ENCODE measurements at regions of chr6 and their contacts with region 1.

Region 1: DNA sequence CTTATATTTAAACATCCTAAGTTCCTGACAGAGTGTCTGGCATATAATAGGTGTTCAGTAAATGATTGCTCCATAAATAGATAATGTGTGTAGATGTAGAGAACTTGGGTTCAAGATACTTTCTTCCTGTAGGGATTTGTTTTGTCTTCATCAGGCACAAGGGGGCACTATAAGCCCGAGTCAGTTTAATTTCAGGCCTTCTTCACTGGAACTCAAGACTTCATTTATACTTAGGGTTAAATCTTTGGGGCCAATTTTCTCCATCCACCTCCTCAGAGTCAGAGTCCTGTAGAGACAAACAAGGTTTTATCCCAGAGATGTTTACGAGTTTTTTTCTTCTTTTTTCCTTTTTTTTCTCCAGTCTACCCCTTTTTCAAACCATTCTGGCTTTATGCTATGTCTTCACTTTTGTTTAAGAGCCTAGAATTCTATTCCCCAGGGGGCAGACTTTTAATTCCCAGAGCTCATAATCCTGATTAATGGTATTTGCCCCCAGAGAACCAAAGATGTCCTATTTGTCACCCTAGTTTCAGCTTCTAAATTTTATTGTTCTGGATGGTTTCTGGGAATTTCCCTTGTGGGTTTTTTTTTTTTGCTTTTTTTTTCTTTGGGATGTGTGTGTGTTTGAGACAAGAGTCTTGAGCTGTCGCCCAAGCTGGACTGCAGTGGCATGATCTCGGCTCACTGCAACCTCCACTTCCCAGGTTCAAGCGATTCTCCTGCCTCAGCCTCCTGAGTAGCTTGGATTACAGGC is 88.4 kb downstream of the HFE start:
- DNase-seq: peak; percentile 60
- H3K4me3 ChIP-seq: no peak overlapping the region
- H3K27ac ChIP-seq: no peak overlapping the region
- H3K4me1 ChIP-seq: peaks cover 3% of the 10 kb centered on the region
- H3K27me3 ChIP-seq: no peaks in the 10 kb centered on the region
- CTCF ChIP-seq: peak; percentile 52 to 64

Region 2: GRCh38 chr6:25992413-25993037 is 183.1 kb before region 1 on chr6:
- CTCF ChIA-PET with region 1: no interaction called
- dilution Hi-C with region 1: no loop called
- in situ Hi-C with region 1: no loop called
- intact Hi-C with region 1: no loop called
- DNase-seq: peak; percentile 88
- H3K4me3 ChIP-seq: peak overlapping the region; percentile 42 to 62 (median 48)
- H3K27ac ChIP-seq: peak overlapping the region; percentile 68
- H3K4me1 ChIP-seq: peaks cover 7% of the 10 kb centered on the region
- H3K27me3 ChIP-seq: no peaks in the 10 kb centered on the region
- CTCF ChIP-seq: peak; percentile 92 to 95

Region 3: DNA sequence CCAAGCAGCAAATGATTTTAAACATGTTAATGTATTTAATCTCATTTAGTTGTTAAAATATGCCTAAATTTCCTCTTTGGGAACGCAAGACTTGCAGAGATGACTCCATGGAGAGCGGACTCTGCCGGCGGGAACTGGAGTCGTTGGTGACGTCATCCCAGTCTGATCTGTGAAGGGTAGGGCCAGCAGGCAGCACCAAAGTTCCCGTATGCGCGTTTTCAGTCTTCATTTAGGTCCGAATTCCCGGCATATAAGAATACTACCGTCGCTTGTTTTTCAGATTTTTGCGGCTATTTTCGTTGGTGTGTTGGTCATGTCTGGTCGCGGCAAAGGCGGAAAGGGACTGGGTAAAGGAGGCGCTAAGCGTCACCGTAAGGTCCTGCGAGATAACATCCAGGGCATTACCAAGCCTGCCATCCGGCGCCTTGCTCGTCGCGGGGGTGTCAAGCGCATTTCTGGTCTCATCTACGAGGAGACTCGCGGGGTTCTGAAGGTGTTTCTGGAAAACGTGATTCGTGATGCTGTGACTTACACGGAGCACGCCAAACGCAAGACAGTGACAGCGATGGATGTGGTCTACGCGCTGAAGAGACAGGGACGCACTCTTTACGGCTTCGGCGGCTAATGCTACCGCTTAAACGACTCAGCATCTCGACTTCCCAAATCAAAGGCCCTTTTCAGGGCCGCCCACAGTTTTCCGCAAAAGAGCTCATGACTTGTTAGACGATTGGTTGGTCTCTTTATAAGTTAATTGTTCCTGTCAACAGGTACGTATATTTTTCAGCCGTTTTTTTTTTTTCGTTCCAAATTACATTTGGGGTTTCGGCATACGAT is 28.9 kb after region 1 on chr6:
- CTCF ChIA-PET with region 1: no interaction called
- dilution Hi-C with region 1: no loop called
- in situ Hi-C with region 1: no loop called
- intact Hi-C with region 1: loop called (anchors 2 kb)
- DNase-seq: peak; percentile 95
- H3K4me3 ChIP-seq: peak overlapping the region; percentile 67 to 73 (median 71)
- H3K27ac ChIP-seq: peak overlapping the region; percentile 97
- H3K4me1 ChIP-seq: peaks cover 19% of the 10 kb centered on the region
- H3K27me3 ChIP-seq: no peaks in the 10 kb centered on the region
- CTCF ChIP-seq: peak; percentile 11 to 36

Region 4: GRCh38 chr6:26312501-26313390 is 137.1 kb after region 1 on chr6:
- CTCF ChIA-PET with region 1: no interaction called
- dilution Hi-C with region 1: no loop called
- in situ Hi-C with region 1: no loop called
- intact Hi-C with region 1: loop called (anchors 2 kb)
- DNase-seq: peak; percentile 81
- H3K4me3 ChIP-seq: peak overlapping the region; percentile 60 to 89 (median 70)
- H3K27ac ChIP-seq: peak overlapping the region; percentile 58
- H3K4me1 ChIP-seq: peaks cover 28% of the 10 kb centered on the region
- H3K27me3 ChIP-seq: no peaks in the 10 kb centered on the region
- CTCF ChIP-seq: no peak

Region 5: DNA sequence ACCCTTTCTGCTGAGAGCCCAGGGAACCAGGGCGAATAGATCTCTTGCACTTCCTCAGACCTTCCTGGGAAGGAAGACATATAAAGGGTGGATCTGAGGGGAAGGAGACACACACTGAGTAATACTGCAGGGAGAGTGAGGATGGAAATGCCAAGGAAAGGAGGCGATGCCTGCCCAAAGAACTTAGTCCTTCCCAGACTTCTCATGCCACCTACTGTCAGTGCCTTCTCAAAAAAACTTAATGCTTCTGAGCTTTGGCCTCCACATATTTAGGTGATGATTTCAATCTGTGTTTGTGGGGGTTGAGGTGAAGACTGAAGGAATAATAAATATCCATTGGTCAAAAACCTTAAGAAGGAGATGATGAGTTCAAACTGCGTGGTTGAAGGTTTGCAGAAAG is 236.1 kb after region 1 on chr6:
- CTCF ChIA-PET with region 1: no interaction called
- dilution Hi-C with region 1: no loop called
- in situ Hi-C with region 1: no loop called
- intact Hi-C with region 1: loop called (anchors 10 kb)
- DNase-seq: peak; percentile 9
- H3K4me3 ChIP-seq: no peak overlapping the region
- H3K27ac ChIP-seq: no peak overlapping the region
- H3K4me1 ChIP-seq: no peaks in the 10 kb centered on the region
- H3K27me3 ChIP-seq: no peaks in the 10 kb centered on the region
- CTCF ChIP-seq: peak in 1 of 2 donors; percentile 14

Measured in mammary epithelial cell (primary cell).